ENCODE measurements at regions of chr3 and their contacts with region 1.

Region 1: GRCh38 chr3:71583566-71584449 is at the start of gene FOXP1:
- DNase-seq: peak; percentile 83
- H3K4me3 Mint-ChIP-seq: peak within 1 kb of the TSS; percentile 91
- H3K27ac Mint-ChIP-seq: peak within 1 kb of the TSS; percentile 97
- H3K4me1 Mint-ChIP-seq: no peaks in the 10 kb centered on the region
- H3K27me3 Mint-ChIP-seq: no peaks in the 10 kb centered on the region
- CTCF ChIP-seq: no peak
- total RNA-seq, gene FOXP1: 81.6 and 82.8 TPM in 2 replicates

Region 2: GRCh38 chr3:70550723-70551319 is 1033.0 kb before region 1 on chr3:
- CTCF ChIA-PET with region 1: no interaction called
- intact Hi-C with region 1: loop called (anchors 2 kb)
- DNase-seq: peak; percentile 75
- H3K4me3 Mint-ChIP-seq: no peak overlapping the region
- H3K27ac Mint-ChIP-seq: no peak overlapping the region
- H3K4me1 Mint-ChIP-seq: no peaks in the 10 kb centered on the region
- H3K27me3 Mint-ChIP-seq: no peaks in the 10 kb centered on the region
- CTCF ChIP-seq: peak; percentile 33

Region 3: DNA sequence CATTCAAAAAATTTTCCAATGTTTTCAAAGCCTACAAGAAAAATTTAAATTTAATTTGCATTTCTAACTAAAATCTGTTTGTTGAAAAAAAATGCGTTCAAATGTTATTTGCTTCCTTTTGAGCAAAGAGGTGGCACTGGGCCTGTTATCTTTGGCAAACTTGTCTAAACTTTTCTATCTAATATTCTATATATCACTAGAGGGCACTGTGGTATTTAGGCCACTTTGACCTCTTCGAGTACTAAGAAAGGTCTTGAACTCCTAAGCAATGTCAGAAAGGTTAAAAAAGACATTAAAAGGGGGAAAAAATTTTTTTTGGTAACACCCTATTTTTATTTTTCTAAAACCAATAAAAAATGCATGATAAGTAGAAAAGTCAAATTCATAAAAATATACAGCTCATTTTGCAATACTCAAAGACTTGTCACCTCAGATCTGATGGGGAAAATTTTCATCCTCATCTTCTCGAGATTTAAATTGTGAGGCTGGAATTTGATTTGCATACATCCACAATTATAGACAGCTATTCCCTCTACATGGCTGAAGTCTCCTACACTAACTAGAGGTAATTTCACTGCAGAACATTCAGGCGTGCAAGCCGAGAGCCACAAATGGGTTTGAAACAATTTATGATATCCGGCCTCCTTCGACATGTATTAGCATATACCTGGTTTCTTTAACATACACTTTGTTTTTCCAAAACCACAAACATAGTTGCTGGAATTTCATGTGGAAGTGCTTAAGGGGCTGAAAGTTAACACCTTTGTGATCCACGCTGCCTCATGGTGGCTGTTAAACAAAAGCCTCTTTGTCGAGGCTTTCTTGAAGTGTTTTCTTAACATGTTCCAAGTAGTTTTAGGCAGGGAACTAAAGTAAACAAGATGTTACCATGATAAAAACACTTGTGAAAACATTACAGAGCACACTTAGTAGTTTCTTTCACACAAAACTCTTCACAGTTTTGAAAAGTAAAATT is 576.7 kb before region 1 on chr3:
- CTCF ChIA-PET with region 1: no interaction called
- intact Hi-C with region 1: loop called (anchors 2 kb)
- DNase-seq: peak; percentile 29
- H3K4me3 Mint-ChIP-seq: no peak overlapping the region
- H3K27ac Mint-ChIP-seq: peak overlapping the region; percentile 87
- H3K4me1 Mint-ChIP-seq: peaks cover 23% of the 10 kb centered on the region
- H3K27me3 Mint-ChIP-seq: no peaks in the 10 kb centered on the region
- CTCF ChIP-seq: no peak

Region 4: GRCh38 chr3:71130471-71131374 is 453.1 kb before region 1 on chr3:
- CTCF ChIA-PET with region 1: interaction called, 3 read pairs
- intact Hi-C with region 1: loop called (anchors 5 kb)
- DNase-seq: peak; percentile 45
- H3K4me3 Mint-ChIP-seq: peak overlapping the region; percentile 88
- H3K27ac Mint-ChIP-seq: peak overlapping the region; percentile 89
- H3K4me1 Mint-ChIP-seq: peaks cover 59% of the 10 kb centered on the region
- H3K27me3 Mint-ChIP-seq: no peaks in the 10 kb centered on the region
- CTCF ChIP-seq: no peak

Region 5: DNA sequence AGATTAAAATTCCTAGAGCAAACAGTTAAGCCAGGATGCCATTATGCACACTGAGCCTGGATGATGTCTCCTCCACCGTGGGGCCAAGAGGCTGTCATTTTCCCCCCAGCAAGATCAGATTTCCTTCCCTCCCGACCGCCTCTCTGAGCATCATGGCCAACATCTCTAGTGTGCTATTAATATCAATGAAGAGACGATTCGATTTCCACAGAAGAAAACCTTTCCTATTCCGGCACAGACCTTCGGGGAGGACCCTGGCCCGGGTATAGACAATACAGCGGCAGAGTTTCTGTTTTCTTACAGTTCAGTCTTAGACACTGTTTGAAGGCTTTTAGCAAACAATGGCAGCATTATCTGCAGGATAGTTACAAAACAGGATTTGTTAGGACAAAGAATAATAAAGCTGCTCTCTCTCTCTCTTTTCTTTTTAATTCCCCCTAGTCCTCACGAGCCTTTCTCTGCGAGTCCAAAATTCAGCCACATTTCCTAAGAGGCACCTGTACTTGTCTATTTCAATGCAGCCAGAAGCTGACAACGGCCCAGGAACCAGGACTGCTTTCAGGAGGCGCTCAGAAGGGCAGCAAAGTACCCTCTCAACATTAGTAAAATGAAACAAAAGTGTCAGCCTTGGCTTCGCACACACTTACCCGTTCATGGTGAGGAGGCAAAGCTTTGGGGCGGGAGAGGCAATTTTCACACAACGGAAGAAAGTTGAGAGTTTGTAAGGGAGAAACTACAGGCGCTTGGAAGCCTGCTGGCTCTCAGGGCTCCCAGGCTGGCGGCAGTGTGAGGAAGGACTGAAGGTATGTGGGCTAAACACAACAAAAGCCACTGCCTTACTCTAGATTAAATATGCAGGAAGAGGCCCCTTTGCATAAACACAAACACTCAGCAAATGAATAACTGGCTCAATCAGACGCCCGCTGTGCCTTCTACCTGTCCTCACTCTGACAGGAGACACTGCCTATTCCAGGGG is 278.3 kb before region 1 on chr3:
- CTCF ChIA-PET with region 1: no interaction called
- intact Hi-C with region 1: loop called (anchors 2 kb)
- DNase-seq: peak; percentile 12
- H3K4me3 Mint-ChIP-seq: peak overlapping the region; percentile 70
- H3K27ac Mint-ChIP-seq: peak overlapping the region; percentile 45
- H3K4me1 Mint-ChIP-seq: peaks cover 39% of the 10 kb centered on the region
- H3K27me3 Mint-ChIP-seq: no peaks in the 10 kb centered on the region
- CTCF ChIP-seq: no peak

Region 6: GRCh38 chr3:71652781-71653413 is 69.1 kb after region 1 on chr3:
- CTCF ChIA-PET with region 1: no interaction called
- intact Hi-C with region 1: loop called (anchors 5 kb)
- DNase-seq: no peak
- H3K4me3 Mint-ChIP-seq: no peak overlapping the region
- H3K27ac Mint-ChIP-seq: no peak overlapping the region
- H3K4me1 Mint-ChIP-seq: peaks cover 28% of the 10 kb centered on the region
- H3K27me3 Mint-ChIP-seq: no peaks in the 10 kb centered on the region
- CTCF ChIP-seq: peak; percentile 15

Measured in Calu3 (cell line).